MCF 10A (cell line): ENCODE measurements at regions of chr18 and their contacts with region 1.

Region 1: DNA sequence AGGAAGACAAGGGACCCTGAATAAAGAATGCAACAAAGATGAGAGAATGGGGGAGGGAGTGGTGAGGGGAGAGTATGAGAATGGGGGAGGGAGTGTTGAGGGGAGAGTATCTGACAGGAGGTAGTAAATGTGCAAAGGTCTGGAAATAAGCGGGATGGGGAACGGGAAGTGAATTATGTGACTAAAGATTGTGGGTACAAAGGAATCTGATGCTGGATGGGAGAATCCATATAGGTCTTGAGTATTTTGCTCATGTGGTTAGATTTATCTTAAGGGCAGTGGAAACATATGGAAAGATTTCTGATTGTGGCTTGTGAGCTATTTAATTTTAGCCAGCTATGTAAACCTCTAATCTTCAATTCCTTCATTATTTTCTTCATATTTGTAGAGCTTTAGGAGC is 593.4 kb downstream of the DCC start:
- DNase-seq: no peak
- H3K4me3 Mint-ChIP-seq: no peak overlapping the region
- H3K27ac Mint-ChIP-seq: no peak overlapping the region
- H3K4me1 Mint-ChIP-seq: no peaks in the 10 kb centered on the region
- H3K27me3 Mint-ChIP-seq: no peaks in the 10 kb centered on the region
- CTCF ChIP-seq: no peak

Region 2: DNA sequence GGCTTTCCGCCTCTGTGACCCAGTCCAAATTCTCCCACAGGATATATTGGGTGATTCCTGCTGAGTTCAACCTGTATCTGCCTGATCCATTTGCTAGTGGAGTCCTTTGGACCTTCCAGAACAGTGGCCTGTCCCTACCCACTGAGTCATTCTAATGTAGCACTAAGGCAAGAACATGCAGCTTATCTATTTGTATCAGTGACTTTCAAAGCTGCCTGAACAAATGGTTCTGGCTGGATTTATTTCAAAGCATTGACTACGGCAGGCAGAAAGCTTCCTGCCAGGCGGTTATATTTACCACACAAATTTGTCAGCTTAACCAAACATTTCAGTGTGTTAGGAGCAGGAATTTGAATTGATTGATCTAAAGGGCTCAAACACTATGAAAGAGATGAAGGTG is 20.0 kb after region 1 on chr18:
- CTCF ChIA-PET with region 1: no interaction called
- POLR2A ChIA-PET with region 1: no interaction called
- intact Hi-C with region 1: no loop called
- DNase-seq: no peak
- H3K4me3 Mint-ChIP-seq: no peak overlapping the region
- H3K27ac Mint-ChIP-seq: no peak overlapping the region
- H3K4me1 Mint-ChIP-seq: no peaks in the 10 kb centered on the region
- H3K27me3 Mint-ChIP-seq: no peaks in the 10 kb centered on the region
- CTCF ChIP-seq: no peak

Region 3: DNA sequence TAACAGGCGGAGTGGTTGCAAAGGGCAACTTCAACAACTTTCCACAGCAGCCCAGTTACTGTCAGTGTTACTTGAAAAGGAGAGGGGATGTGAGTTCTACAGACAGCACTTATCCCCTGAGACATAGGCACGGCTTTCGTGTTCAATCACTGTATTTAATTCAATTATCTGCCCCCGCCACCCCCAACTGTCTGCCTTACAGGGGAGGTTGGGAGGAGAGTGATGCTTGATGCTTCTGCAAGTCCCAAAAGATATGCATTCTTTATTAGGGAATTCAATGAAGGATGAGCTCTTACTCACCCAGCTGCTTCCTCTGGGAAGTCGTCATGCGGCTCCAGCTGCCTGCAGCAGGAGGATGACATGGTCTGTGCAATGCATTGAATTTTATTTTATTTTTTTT is 46.5 kb after region 1 on chr18:
- CTCF ChIA-PET with region 1: no interaction called
- POLR2A ChIA-PET with region 1: no interaction called
- intact Hi-C with region 1: no loop called
- DNase-seq: no peak
- H3K4me3 Mint-ChIP-seq: no peak overlapping the region
- H3K27ac Mint-ChIP-seq: no peak overlapping the region
- H3K4me1 Mint-ChIP-seq: no peaks in the 10 kb centered on the region
- H3K27me3 Mint-ChIP-seq: no peaks in the 10 kb centered on the region
- CTCF ChIP-seq: no peak

Region 4: GRCh38 chr18:52992041-52992440 is 58.7 kb after region 1 on chr18:
- CTCF ChIA-PET with region 1: no interaction called
- POLR2A ChIA-PET with region 1: no interaction called
- intact Hi-C with region 1: loop called (anchors 2 kb)
- DNase-seq: peak; percentile 6
- H3K4me3 Mint-ChIP-seq: no peak overlapping the region
- H3K27ac Mint-ChIP-seq: no peak overlapping the region
- H3K4me1 Mint-ChIP-seq: no peaks in the 10 kb centered on the region
- H3K27me3 Mint-ChIP-seq: no peaks in the 10 kb centered on the region
- CTCF ChIP-seq: no peak